ENCODE measurements at regions of chr3 and their contacts with region 1.

Region 1: DNA sequence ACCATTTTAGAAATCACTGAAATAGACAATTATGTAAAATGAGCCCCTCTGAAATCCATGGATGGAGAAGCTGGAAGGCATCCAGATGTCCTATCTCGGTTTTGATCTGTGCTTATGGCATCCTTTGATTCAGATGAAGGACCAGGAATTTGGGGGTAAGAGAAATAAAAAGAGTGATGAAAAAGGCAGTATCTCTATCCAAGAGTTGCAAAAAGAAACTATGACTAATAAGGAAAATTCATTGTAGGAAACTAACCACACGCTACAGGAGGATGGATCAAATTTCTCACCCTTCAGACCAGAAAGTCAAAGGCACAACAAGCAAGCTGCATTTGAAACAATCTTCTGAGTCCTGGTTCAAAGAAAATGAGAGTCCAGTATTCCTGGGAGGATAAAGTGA is 34.8 kb downstream of the SRGAP3 start:
- DNase-seq: peak; percentile 83
- H3K4me3 ChIP-seq: no peak overlapping the region
- H3K27ac ChIP-seq: peak overlapping the region; percentile 87
- H3K4me1 ChIP-seq: peaks cover 30% of the 10 kb centered on the region
- H3K27me3 ChIP-seq: no peaks in the 10 kb centered on the region
- CTCF ChIP-seq: no peak

Region 2: GRCh38 chr3:8970971-8971589 is 243.5 kb before region 1 on chr3:
- CTCF ChIA-PET with region 1: no interaction called
- dilution Hi-C with region 1: loop called (anchors 5 kb)
- in situ Hi-C with region 1: no loop called
- intact Hi-C with region 1: no loop called
- DNase-seq: peak; percentile 48
- H3K4me3 ChIP-seq: no peak overlapping the region
- H3K27ac ChIP-seq: no peak overlapping the region
- H3K4me1 ChIP-seq: no peaks in the 10 kb centered on the region
- H3K27me3 ChIP-seq: no peaks in the 10 kb centered on the region
- CTCF ChIP-seq: peak; percentile 98 to 99

Region 3: DNA sequence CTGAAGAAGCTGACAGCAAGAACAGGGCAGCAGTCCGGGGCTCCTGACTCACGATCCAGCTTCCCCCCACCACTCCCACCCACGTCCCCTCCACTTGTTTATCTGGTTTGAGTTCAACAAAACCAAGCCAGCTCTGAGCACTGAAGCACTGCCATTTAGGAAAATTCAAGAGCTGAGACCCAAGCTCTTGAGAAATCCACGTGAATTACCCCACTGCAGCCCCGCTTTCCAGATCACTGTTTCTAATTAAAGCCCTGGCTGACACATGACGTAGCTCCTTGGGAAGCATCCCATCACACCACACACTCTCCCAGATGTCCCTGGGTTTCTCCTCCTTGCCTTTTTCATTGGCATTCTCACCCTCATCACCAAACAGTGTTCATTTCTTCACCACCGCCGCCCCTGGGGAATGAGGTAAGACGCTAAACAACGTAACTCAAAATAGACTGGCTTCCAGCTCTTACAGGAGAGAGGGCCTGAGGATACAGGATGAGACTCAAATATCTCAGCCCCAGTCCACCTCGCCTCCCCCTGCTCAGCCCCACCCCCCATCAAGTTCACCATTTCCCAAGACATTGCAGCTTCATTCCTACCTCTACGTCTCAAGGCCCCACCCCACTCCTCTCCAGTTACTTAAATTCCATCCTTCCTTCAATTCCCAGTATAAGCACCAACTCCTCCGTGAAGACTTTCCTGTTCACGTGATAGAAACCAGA is 60.5 kb before region 1 on chr3:
- CTCF ChIA-PET with region 1: no interaction called
- dilution Hi-C with region 1: loop called (anchors 10 kb)
- in situ Hi-C with region 1: no loop called
- intact Hi-C with region 1: no loop called
- DNase-seq: no peak
- H3K4me3 ChIP-seq: no peak overlapping the region
- H3K27ac ChIP-seq: no peak overlapping the region
- H3K4me1 ChIP-seq: peaks cover 30% of the 10 kb centered on the region
- H3K27me3 ChIP-seq: no peaks in the 10 kb centered on the region
- CTCF ChIP-seq: no peak

Region 4: GRCh38 chr3:9175455-9175854 is 39.1 kb before region 1 on chr3:
- CTCF ChIA-PET with region 1: no interaction called
- dilution Hi-C with region 1: no loop called
- in situ Hi-C with region 1: no loop called
- intact Hi-C with region 1: loop called (anchors 1 kb)
- DNase-seq: peak; percentile 85
- H3K4me3 ChIP-seq: no peak overlapping the region
- H3K27ac ChIP-seq: peak overlapping the region; percentile 92
- H3K4me1 ChIP-seq: peaks cover 54% of the 10 kb centered on the region
- H3K27me3 ChIP-seq: no peaks in the 10 kb centered on the region
- CTCF ChIP-seq: no peak

Region 5: DNA sequence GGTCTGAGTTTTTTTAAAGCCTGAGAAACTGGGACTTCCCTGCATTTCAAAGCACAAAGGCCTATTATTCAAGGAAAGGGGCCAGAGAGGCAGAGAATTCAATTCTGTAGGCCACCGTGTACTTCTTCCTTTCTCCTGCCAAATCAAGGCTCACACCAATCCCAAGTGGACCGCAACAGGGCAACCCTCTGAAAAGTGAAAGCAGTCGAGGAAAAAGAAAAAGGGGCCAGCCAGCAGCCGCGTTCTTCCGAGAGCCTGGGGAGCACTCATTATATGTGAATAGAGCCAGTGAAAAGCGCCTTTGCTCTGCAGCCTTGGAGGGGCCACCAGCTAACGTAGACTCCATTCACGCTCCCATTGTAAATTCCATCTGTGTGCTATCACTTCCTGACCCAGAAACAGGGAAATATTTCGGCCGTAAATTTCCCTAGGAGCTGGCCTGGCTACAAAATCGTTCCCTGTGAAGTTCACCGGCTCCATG is 102.3 kb after region 1 on chr3:
- CTCF ChIA-PET with region 1: no interaction called
- dilution Hi-C with region 1: loop called (anchors 5 kb)
- in situ Hi-C with region 1: no loop called
- intact Hi-C with region 1: no loop called
- DNase-seq: peak; percentile 51
- H3K4me3 ChIP-seq: peak overlapping the region; percentile 9 to 30 (median 14)
- H3K27ac ChIP-seq: peak overlapping the region; percentile 9
- H3K4me1 ChIP-seq: peaks cover 11% of the 10 kb centered on the region
- H3K27me3 ChIP-seq: no peaks in the 10 kb centered on the region
- CTCF ChIP-seq: no peak

Measured in mammary epithelial cell (primary cell).